Dendritic cell treated with granulocyte-macrophage colony-stimulating factor and Interleukin-4, amounts not matched to agents 40 ng/mL and 50 ng/mL, for 4 days (primary cell): ENCODE measurements at regions of chr20 and their contacts with region 1.

Region 1: DNA sequence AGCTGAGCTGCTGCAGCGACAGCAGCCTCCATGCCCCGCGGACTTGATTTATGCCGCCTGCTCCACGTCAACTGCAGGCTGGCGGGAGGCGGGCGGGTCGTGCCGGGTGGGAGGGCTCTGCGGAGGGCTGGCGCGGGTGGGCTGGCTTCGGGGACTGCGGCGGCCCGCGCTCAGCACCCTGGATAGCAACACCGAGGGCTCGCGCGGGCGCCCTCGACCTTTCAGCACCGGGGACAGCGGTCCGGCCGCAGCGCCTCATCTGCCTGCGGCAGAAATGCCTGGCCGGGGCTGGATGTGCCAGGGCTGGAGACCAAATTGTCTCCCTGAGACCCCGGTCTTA is 792 bp downstream of the SNAP25 start:
- H3K4me3 Mint-ChIP-seq: no peak overlapping the region
- H3K27ac Mint-ChIP-seq: no peak overlapping the region
- H3K4me1 Mint-ChIP-seq: peaks cover 15% of the 10 kb centered on the region
- H3K27me3 Mint-ChIP-seq: peaks cover 47% of the 10 kb centered on the region

Region 2: DNA sequence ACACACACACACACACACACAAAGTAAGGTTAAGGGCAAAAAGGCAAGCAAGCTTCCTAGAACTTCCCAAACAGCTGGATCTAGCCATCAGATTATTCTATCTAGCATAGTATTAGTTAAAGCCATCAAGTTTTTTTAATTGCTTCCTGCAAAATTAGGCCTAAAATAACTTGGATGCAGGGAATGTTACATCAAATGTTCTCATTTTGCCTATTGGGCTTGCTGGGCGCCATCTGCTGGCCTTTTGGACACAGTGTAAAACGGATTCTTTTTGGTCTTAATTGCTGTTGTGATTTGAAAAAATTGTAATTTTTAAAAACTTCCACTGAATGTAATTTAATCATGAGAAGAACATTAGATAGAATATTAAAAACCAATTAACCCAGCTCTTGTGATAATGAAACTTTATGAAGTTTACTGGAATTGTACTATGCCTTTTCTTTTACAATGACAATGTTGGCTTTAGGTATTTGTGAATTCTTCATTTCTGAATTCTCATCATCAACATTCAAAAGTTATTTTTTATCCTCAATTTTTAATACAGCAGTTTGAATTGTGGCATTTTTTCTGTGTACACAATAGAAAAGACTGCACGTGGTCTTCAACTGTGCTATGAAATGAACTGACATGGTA is 207.8 kb after region 1 on chr20:
- intact Hi-C with region 1: loop called (anchors 10 kb)
- H3K4me3 Mint-ChIP-seq: no peak overlapping the region
- H3K27ac Mint-ChIP-seq: peak overlapping the region; percentile 4
- H3K4me1 Mint-ChIP-seq: peaks cover 73% of the 10 kb centered on the region
- H3K27me3 Mint-ChIP-seq: no peaks in the 10 kb centered on the region